Activated naive CD4-positive, alpha-beta T cell treated with anti-CD3 and anti-CD28 coated beads for 36 hours (primary cell): ENCODE measurements at regions of chr12 and their contacts with region 1.

Region 1: DNA sequence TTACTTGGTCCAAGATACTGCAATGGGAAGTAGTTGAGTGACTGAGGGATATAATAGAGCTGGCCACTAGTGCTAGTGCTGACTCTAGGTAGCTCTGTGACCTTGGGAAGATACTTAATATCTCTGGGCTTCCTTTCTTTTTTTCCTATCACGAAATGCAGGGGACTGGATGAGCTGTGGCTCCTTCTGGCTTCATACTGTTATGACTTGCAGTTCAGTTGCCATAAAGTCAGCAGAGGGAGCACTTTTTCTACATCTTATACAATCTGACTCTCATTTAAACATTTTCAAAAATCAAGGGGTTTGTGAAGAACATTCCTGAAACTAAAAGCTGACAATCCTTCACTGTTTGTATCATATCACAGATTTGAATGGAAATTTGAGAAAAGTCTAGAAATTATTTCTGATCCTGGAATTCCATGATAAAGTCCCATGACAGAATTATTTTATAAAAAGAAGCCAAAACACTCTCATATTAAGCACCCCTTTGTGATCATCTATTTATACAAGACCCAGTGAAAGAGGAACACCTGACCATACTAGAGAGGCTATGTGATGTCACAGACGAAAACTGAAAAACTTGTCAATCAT is 5.4 kb downstream of the BHLHE41 start:
- DNase-seq: peak; percentile 21
- H3K4me3 Mint-ChIP-seq: no peak overlapping the region
- H3K27ac Mint-ChIP-seq: no peak overlapping the region
- H3K4me1 Mint-ChIP-seq: peaks cover 17% of the 10 kb centered on the region
- H3K27me3 Mint-ChIP-seq: peaks cover 60% of the 10 kb centered on the region

Region 2: GRCh38 chr12:26102953-26103352 is 16.5 kb before region 1 on chr12:
- CTCF ChIA-PET with region 1: no interaction called
- intact Hi-C with region 1: no loop called
- DNase-seq: no peak
- H3K4me3 Mint-ChIP-seq: no peak overlapping the region
- H3K27ac Mint-ChIP-seq: no peak overlapping the region
- H3K4me1 Mint-ChIP-seq: no peaks in the 10 kb centered on the region
- H3K27me3 Mint-ChIP-seq: peaks cover 10% of the 10 kb centered on the region

Region 3: DNA sequence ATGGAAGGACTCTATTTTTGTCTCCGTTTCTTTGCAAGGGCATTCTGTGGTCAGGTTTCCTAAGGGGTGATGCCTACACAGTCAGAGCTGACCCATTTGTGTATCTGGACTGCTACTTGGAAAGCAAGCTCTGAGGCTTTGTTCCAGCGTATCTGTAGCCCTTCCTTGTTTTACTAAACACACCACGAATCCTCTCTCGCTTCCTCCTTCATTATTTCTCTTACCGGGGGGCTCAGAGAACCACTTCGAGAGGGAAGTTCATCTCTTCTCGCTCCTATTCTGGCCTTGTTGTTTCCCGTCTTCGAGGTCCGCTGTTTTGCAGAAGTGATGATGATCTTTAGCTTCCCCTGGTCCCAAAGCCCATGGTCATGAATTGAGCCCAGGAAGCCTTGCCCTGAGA is 240.6 kb after region 1 on chr12:
- CTCF ChIA-PET with region 1: no interaction called
- intact Hi-C with region 1: no loop called
- DNase-seq: no peak
- H3K4me3 Mint-ChIP-seq: no peak overlapping the region
- H3K27ac Mint-ChIP-seq: no peak overlapping the region
- H3K4me1 Mint-ChIP-seq: no peaks in the 10 kb centered on the region
- H3K27me3 Mint-ChIP-seq: no peaks in the 10 kb centered on the region

Region 4: DNA sequence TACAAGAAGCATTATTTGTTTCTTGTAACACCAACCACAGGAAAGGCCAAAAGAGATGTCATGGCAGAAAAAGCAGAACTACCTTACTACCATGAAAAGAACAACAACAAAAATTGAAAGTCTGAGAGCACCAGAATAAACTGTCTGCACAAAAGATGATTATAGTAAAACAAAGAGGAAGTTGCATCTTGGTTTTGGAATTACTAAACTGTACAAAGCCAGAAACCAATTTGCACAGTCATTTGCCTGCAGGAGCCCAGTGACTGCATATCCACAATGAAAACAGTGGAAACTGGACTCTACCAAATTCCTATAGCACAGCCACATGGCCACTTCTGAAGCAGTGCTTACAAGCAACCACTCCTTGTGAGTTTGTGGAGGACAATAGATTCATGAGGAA is 352.1 kb after region 1 on chr12:
- CTCF ChIA-PET with region 1: no interaction called
- intact Hi-C with region 1: loop called (anchors 1 kb)
- DNase-seq: peak; percentile 39
- H3K4me3 Mint-ChIP-seq: no peak overlapping the region
- H3K27ac Mint-ChIP-seq: peak overlapping the region; percentile 33
- H3K4me1 Mint-ChIP-seq: peaks cover 12% of the 10 kb centered on the region
- H3K27me3 Mint-ChIP-seq: no peaks in the 10 kb centered on the region

Region 5: GRCh38 chr12:26523708-26524150 is 404.2 kb after region 1 on chr12:
- CTCF ChIA-PET with region 1: interaction called, 4 read pairs
- intact Hi-C with region 1: loop called (anchors 2 kb)
- DNase-seq: no peak
- H3K4me3 Mint-ChIP-seq: no peak overlapping the region
- H3K27ac Mint-ChIP-seq: no peak overlapping the region
- H3K4me1 Mint-ChIP-seq: peaks cover 10% of the 10 kb centered on the region
- H3K27me3 Mint-ChIP-seq: no peaks in the 10 kb centered on the region

Region 6: GRCh38 chr12:26614020-26614616 is 494.6 kb after region 1 on chr12:
- CTCF ChIA-PET with region 1: interaction called, 3 read pairs
- intact Hi-C with region 1: loop called (anchors 1 kb)
- DNase-seq: peak; percentile 51
- H3K4me3 Mint-ChIP-seq: no peak overlapping the region
- H3K27ac Mint-ChIP-seq: no peak overlapping the region
- H3K4me1 Mint-ChIP-seq: no peaks in the 10 kb centered on the region
- H3K27me3 Mint-ChIP-seq: no peaks in the 10 kb centered on the region

Region 7: DNA sequence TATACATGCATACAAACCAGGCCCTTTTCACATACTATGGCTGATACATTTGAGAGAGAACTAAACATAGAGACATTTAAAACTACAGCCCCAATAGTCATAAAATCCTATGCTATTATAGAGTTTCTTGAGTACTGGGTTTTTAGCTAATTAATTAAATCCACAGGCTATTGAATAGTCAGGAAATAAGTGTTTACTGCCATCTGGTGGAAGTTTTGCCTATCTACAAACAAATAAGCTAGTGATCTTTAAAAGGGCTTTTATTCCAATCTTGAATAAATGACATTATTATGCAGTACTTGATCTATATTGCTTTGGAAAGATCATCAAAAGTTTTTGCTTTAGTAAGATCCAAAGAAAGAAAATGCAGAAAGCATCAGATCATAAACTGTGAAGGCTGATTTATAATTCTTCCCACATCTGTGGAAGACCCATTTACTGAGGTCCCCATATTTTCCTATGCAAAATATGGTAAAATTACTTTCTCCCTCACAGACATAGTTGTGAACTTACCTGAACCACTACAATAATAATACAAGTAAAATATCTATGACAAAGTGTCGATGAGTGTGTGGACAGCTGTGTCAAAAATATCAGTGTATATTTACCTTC is 582.2 kb after region 1 on chr12:
- CTCF ChIA-PET with region 1: interaction called, 3 read pairs
- intact Hi-C with region 1: loop called (anchors 1 kb)
- DNase-seq: no peak
- H3K4me3 Mint-ChIP-seq: no peak overlapping the region
- H3K27ac Mint-ChIP-seq: no peak overlapping the region
- H3K4me1 Mint-ChIP-seq: no peaks in the 10 kb centered on the region
- H3K27me3 Mint-ChIP-seq: no peaks in the 10 kb centered on the region